OCI-LY7 (cell line): ENCODE measurements at regions of chr2 and their contacts with region 1.

Region 1: DNA sequence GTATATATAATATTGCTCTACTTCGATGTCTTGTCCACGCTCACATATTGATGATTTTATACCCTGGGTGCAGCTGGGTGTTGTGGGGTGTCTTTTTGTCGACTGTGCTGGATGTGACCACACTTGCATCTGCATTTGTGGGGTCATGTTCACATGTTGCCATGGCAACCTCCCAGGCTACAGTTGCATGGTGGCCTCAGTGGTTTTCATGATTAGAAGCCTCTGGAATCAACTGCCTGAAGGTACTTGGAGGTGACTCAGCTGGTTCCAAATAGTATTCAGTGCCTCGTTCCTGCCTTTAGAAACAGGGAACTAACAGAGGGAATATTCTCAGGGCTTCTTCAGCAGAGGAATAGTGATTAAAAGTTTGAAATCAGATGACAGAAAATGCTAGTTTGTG is 166.3 kb upstream of the NYAP2 start:
- DNase-seq: no peak
- H3K4me3 ChIP-seq: no peak overlapping the region
- H3K27ac ChIP-seq: no peak overlapping the region
- H3K4me1 ChIP-seq: peaks cover 4% of the 10 kb centered on the region
- CTCF ChIP-seq: no peak

Region 2: GRCh38 chr2:225130093-225130492 is 103.1 kb before region 1 on chr2:
- CTCF ChIA-PET with region 1: no interaction called
- POLR2A ChIA-PET with region 1: no interaction called
- intact Hi-C with region 1: no loop called
- DNase-seq: no peak
- H3K4me3 ChIP-seq: no peak overlapping the region
- H3K27ac ChIP-seq: no peak overlapping the region
- H3K4me1 ChIP-seq: no peaks in the 10 kb centered on the region
- CTCF ChIP-seq: no peak

Region 3: DNA sequence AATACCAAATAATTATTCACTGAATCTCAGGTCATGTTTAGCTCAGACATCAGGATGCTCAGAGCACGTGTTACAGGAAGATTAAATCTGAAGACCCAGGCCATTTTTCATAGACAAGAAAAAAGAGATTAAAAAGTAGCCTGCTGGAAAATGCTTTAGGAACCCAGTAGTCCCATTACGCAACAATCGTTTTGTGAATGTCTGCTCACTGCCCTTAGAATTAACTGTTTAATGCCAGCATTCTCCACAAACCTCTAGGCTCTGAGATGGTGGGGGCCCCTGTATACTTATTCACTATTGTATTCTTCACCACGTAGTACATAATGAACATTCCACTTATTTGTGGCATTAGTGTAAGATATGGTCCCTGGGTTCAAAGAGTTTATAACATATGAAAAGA is 11.7 kb after region 1 on chr2:
- CTCF ChIA-PET with region 1: no interaction called
- POLR2A ChIA-PET with region 1: interaction called, 10 read pairs
- intact Hi-C with region 1: no loop called
- DNase-seq: no peak
- H3K4me3 ChIP-seq: no peak overlapping the region
- H3K27ac ChIP-seq: no peak overlapping the region
- H3K4me1 ChIP-seq: no peaks in the 10 kb centered on the region
- CTCF ChIP-seq: no peak